Esophagus muscularis mucosa (tissue), 4 donors: ENCODE measurements at regions of chr9 and their contacts with region 1.

Region 1: GRCh38 chr9:70043689-70044489 is at the start of gene MAMDC2:
- DNase-seq: peak; percentile 92
- H3K4me3 ChIP-seq: peak within 1 kb of the TSS; percentile 75 to 85 (median 78)
- H3K27ac ChIP-seq: peak within 1 kb of the TSS; percentile 91 to 96 (median 94)
- H3K4me1 ChIP-seq: peaks cover 35 to 90% (median 77%) of the 10 kb centered on the region in 4 donors
- H3K27me3 ChIP-seq: no peaks in the 10 kb centered on the region
- CTCF ChIP-seq: no peak
- EP300 ChIP-seq: no peak
- POLR2A ChIP-seq: peak; percentile 25
- total RNA-seq, gene MAMDC2: 115 to 147 (median 126) TPM

Region 2: DNA sequence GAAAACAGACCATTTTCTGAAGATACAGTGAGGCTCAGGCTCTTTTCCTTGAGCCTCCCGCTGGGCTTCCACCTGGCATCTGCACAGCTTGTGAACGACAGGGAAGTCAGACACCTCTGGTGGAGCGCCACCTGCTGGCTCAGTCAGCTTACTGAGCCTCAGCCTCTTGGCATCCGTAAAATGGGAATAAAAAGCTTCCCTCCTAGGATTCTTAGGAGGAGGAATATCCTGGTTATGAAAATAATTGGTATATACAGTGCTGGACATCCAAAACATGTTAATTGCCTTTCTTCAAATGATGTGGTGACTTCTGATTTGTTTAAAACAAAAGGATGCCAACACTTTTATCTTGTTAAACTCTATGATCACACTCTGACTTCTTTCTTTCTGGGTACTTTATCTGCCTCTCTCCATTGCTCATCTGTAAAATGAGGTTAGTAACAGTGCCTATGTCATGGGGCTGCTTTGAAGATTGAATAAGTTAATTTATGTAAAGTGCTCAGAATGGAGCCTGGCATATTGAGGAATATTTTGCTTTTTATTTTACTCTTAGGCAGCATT is 67.2 kb after region 1 on chr9:
- intact Hi-C with region 1: loop called (anchors 5 kb)
- DNase-seq: peak; percentile 94
- H3K4me3 ChIP-seq: no peak overlapping the region
- H3K27ac ChIP-seq: peak overlapping the region; percentile 40 to 71 (median 66)
- H3K4me1 ChIP-seq: peaks cover 10 to 75% (median 69%) of the 10 kb centered on the region in 4 donors
- H3K27me3 ChIP-seq: no peaks in the 10 kb centered on the region
- CTCF ChIP-seq: peak; percentile 90 to 95 (median 93)
- EP300 ChIP-seq: no peak
- POLR2A ChIP-seq: no peak